ENCODE measurements at regions of chr5 and their contacts with region 1.

Region 1: DNA sequence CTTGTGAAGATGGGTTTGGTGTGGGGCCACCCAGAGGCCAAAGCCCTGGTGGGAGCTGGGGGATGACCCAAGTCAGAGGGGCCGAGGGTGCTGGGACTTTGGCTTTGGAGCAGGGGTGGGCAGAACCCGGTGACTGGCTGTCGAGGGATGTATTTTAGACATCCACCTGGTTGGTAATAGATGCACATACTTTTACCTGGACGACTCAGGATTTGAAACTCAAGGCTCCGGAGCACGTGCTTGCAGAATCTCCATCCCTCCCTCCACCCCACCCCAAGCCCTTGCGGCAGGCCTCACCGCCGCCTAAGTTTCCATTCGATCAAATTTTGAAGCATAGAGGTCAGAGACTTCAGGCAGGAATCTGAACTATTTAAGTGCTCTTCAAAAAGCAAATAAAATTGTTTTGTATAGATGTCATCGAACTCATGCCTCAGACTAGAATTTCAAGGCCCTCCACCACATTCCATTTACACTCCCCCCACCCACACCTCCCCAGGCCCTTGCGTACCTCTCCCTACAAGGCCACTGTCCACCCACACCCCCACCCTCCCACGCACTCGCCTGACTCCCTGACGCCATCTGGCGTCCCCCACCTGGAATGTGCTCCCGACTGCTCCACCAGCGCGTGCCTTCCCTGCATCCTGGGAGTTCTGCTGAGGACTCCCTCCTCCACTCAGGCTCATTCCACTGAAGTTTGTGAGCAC is 56.6 kb upstream of the RPL26L1 start:
- DNase-seq: peak; percentile 66 to 78
- ATAC-seq: no peak

Region 2: GRCh38 chr5:172849606-172850453 is 52.8 kb before region 1 on chr5:
- intact Hi-C with region 1: loop called in 1 of 2 experiments (anchors 10 kb)
- DNase-seq: peak; percentile 77 to 90
- ATAC-seq: peak; percentile 76